Tibial artery (tissue), 4 donors: ENCODE measurements at regions of chr3 and their contacts with region 1.

Region 1: DNA sequence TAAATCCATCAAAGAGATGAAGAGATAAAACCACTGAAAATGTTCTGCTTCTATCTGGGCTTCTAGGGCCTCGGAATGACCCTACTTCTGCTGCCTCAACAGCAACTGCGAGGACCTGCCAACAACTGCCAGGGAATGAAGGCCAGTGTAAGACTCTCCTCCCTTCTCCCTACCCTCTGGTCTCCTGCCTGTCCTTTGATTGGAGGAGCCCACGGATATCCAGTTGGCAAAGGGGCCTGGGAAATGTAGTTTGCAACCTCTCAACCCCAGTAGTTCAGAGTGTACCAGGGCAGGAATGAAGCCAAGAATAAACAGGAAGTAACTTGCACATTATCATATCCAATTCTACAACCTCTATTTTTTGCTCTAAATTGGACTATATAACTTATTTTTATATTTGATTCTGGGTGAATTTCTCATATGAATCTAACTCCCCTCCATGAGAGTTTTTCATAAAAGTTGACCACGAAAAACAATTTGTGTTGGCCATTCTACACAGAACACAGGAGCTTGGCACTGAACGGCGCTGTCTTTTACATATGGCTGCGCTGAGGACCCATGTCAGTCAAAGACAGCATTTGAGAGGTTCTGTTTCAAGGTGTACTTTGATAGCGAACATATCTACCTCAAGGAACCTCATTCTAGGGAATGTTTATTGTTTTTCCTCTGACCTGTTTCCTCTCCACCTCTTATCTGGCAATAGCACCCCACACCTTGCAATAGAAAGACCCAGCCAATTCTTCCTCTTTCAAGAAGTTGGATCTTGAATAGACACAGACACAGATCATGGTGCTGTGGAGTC is 91.1 kb upstream of the RNF7 start:
- DNase-seq: peak in 1 of 2 donors; percentile 54
- H3K4me3 ChIP-seq: no peak overlapping the region
- H3K27ac ChIP-seq: no peak overlapping the region
- H3K4me1 ChIP-seq: peaks cover 0 to 16% (median 9%) of the 10 kb centered on the region in 4 donors
- H3K27me3 ChIP-seq: no peaks in the 10 kb centered on the region
- CTCF ChIP-seq: no peak

Region 2: GRCh38 chr3:141044695-141045641 is 602.0 kb before region 1 on chr3:
- intact Hi-C with region 1: no loop called
- DNase-seq: no peak
- H3K4me3 ChIP-seq: no peak overlapping the region
- H3K27ac ChIP-seq: no peak overlapping the region
- H3K4me1 ChIP-seq: no peaks in the 10 kb centered on the region
- H3K27me3 ChIP-seq: peaks cover 0 to 3% of the 10 kb centered on the region in 2 donors
- CTCF ChIP-seq: no peak

Region 3: GRCh38 chr3:141561426-141562034 is 85.4 kb before region 1 on chr3:
- intact Hi-C with region 1: no loop called
- DNase-seq: no peak
- H3K4me3 ChIP-seq: no peak overlapping the region
- H3K27ac ChIP-seq: peak overlapping the region in 1 of 2 donors; percentile 44
- H3K4me1 ChIP-seq: peaks cover 0 to 11% (median 4%) of the 10 kb centered on the region in 4 donors
- H3K27me3 ChIP-seq: no peaks in the 10 kb centered on the region
- CTCF ChIP-seq: peak; percentile 97 to 98

Region 4: DNA sequence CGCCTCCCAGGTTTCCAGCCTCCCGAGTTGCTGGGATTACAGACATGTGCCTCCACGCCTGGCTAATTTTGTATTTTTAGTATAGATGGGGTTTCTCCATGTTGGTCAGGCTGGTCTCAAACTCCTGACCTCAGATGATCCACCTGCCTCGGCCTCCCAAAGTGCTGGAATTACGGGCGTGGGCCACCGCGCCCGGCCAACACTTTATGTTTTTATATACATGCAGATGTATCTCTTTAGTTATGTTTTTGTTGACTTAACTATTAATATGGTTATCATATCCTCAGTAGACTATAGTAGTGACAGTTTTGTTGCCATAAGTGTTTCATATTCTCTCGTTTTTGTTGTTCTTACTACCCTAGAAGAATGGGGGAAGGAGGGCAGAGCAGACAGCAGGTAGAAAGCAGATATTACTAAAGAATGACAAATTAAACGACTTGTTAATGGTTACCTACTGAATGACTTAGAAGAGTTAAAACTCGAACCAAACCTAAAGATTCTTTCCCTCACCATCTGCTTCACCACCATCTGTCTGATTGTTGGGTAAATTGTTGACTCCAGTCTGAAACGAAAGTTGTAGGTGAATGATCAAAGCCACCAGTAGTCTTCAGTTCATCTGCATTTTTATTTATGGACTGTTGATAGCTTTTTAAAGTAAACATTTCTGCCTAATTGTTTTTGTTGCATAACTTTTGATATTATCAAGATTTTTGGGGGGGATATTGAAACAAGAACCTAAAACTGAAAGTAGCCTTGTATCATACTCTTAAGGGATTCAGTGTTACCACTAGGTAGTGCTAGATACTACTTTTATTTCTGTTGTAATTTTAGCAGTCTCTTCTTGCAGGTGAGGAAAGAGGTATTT is 70.8 kb before region 1 on chr3:
- intact Hi-C with region 1: loop called (anchors 2 kb)
- DNase-seq: no peak
- H3K4me3 ChIP-seq: no peak overlapping the region
- H3K27ac ChIP-seq: no peak overlapping the region
- H3K4me1 ChIP-seq: no peaks in the 10 kb centered on the region
- H3K27me3 ChIP-seq: no peaks in the 10 kb centered on the region
- CTCF ChIP-seq: peak; percentile 51 to 53